Sigmoid colon (tissue), 7 donors: ENCODE measurements at regions of chr15 and their contacts with region 1.

Region 1: GRCh38 chr15:80058851-80059785 is at the start of gene ZFAND6:
- DNase-seq: peak; percentile 97
- H3K4me3 ChIP-seq: peak within 1 kb of the TSS; percentile 47 to 96 (median 87)
- H3K27ac ChIP-seq: peak within 1 kb of the TSS; percentile 90 to 98 (median 94)
- H3K4me1 ChIP-seq: peaks cover 0 to 31% (median 22%) of the 10 kb centered on the region in 4 donors
- H3K27me3 ChIP-seq: no peaks in the 10 kb centered on the region
- CTCF ChIP-seq: peak in 1 of 4 experiments; percentile 11
- EP300 ChIP-seq: no peak
- POLR2A ChIP-seq: peak; percentile 59 to 67
- total RNA-seq, gene ZFAND6: 116 to 177 (median 155) TPM

Region 2: DNA sequence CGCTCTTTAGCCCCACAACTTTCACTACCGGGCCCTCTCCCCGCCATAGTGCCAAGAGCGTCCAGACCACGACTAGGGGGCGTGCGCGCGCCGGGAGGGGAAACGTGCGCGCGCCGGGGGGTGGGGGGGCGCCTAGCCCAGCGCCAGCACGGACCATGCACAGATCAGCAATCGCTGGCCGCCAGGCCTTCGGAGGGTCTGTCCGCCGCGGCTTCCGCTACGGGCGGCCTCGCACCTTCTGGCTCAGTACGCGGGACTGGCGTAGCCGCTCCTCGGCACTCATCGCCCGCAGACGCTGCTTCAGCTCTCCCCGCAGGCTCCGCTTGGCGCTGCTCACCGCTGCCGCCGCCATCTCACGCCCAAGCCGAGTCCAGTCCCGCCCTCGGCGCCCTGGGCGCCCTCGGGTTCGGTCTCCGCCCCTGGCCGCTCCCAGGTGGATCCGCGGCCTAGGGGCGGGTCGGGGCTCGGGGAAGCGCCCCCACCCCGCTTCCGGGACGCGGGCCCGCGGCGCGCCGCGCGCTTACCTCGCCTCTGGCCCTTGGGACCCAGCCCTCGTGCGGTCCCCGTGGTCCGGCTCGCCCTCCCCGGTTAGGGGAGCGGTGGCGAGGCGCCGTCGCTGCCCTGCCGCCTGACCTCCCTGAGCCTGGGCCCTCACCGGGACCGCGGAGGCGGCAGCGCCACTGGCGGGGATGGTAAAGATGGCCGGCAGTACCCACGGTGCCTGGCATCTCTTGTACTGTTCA is 162.3 kb before region 1 on chr15 and contains the start of gene MTHFS:
- intact Hi-C with region 1: loop called (anchors 2 kb)
- DNase-seq: peak; percentile 82
- H3K4me3 ChIP-seq: peak within 1 kb of the TSS; percentile 52 to 96 (median 70)
- H3K27ac ChIP-seq: peak within 1 kb of the TSS; percentile 86 to 98 (median 89)
- H3K4me1 ChIP-seq: peaks cover 0 to 13% (median 8%) of the 10 kb centered on the region in 4 donors
- H3K27me3 ChIP-seq: no peaks in the 10 kb centered on the region
- CTCF ChIP-seq: peak in 3 of 4 experiments; percentile 3 to 52 (median 28)
- EP300 ChIP-seq: no peak
- POLR2A ChIP-seq: no peak
- total RNA-seq, gene MTHFS: 6.9 to 31.0 (median 9.5) TPM

Region 3: GRCh38 chr15:79923515-79924395 is 135.4 kb before region 1 on chr15:
- intact Hi-C with region 1: loop called (anchors 2 kb)
- DNase-seq: peak; percentile 97
- H3K4me3 ChIP-seq: peak overlapping the region; percentile 69 to 92 (median 80)
- H3K27ac ChIP-seq: peak overlapping the region; percentile 89 to 99 (median 94)
- H3K4me1 ChIP-seq: peaks cover 0 to 16% (median 8%) of the 10 kb centered on the region in 4 donors
- H3K27me3 ChIP-seq: no peaks in the 10 kb centered on the region
- CTCF ChIP-seq: no peak
- EP300 ChIP-seq: no peak
- POLR2A ChIP-seq: peak; percentile 67 to 76

Region 4: DNA sequence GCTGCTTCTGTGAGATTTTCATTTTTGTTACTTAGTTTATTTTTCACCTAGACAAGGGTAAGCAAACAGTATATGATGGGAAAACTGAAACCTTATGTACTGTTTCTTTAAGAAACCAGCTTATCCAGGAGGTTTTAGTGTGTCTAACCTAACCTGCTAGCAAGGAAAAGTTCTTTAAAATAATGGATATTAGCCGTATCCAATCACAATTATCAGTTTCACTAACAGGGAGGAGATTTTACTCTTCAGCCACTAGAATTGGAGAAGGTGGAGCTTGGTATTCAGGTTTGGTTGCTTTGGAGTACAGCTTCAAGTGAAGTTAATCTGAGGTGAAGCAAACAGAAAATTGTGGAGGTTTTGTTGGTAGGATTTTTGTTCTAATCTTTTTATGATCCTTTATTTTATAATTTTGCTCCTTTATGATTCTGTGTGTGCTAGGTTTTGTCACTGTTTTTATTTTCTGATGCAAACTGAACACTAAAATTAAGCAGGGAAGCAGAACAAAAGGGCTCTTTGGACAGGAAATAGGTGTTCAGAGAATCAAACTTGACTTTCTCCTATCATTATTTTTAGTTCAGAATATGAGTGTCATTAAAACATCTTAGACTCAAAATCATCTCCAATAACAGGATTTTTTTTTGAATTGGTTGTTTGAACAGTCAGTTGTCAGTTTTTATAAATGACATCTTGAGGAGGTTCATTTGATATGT is 13.3 kb after region 1 on chr15:
- intact Hi-C with region 1: loop called (anchors 1 kb)
- DNase-seq: no peak
- H3K4me3 ChIP-seq: peak overlapping the region in 3 of 4 donors; percentile 30 to 42 (median 38)
- H3K27ac ChIP-seq: peak overlapping the region in 3 of 4 donors; percentile 33 to 54 (median 48)
- H3K4me1 ChIP-seq: peaks cover 0 to 73% (median 50%) of the 10 kb centered on the region in 4 donors
- H3K27me3 ChIP-seq: no peaks in the 10 kb centered on the region
- CTCF ChIP-seq: no peak
- EP300 ChIP-seq: no peak
- POLR2A ChIP-seq: no peak

Region 5: DNA sequence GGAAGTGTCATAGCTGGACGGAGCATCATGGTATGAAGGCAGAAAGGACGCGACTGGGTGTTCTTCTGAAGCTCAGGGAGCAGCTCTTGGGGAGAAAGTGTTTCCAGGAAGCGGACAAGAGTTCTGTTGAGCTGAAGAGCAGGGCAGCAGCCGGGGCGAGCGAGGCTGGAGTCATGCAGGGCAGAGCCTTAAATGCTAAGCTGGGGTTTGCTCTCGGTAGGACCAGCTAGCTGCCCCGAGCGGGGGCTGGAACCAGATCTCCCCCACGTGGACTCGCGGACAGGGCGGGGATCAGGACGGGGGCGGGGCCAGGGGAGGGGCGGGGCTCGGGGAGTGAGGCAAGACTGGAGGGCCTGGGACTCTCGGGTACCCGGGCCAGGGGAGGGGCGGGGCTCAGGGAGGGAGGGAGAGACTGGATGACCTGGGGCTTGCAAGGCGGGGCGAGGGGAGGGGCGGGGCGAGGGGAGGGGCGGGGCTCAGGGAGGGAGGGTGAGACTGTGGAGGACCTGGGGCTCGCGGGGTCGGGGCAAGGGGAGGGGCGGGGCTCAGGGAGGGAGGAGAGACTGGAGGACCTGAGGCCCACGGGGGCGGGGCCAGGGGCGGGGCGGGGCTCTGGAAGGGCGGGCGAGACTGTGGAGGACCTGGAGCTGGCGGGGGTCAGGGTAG is 93.2 kb after region 1 on chr15:
- intact Hi-C with region 1: loop called (anchors 1 kb)
- DNase-seq: peak; percentile 99
- H3K4me3 ChIP-seq: peak overlapping the region; percentile 58 to 80 (median 74)
- H3K27ac ChIP-seq: peak overlapping the region; percentile 81 to 90 (median 86)
- H3K4me1 ChIP-seq: peaks cover 0 to 19% (median 13%) of the 10 kb centered on the region in 4 donors
- H3K27me3 ChIP-seq: no peaks in the 10 kb centered on the region
- CTCF ChIP-seq: no peak
- EP300 ChIP-seq: no peak
- POLR2A ChIP-seq: no peak

Region 6: GRCh38 chr15:80234883-80235282 is 175.8 kb after region 1 on chr15:
- intact Hi-C with region 1: no loop called
- DNase-seq: no peak
- H3K4me3 ChIP-seq: no peak overlapping the region
- H3K27ac ChIP-seq: no peak overlapping the region
- H3K4me1 ChIP-seq: no peaks in the 10 kb centered on the region
- H3K27me3 ChIP-seq: peaks cover 0 to 27% (median 0%) of the 10 kb centered on the region in 3 donors
- CTCF ChIP-seq: peak in 2 of 4 experiments; percentile 14 to 19
- EP300 ChIP-seq: no peak
- POLR2A ChIP-seq: no peak